CD4-positive, alpha-beta T cell (primary cell): ENCODE measurements at regions of chr19 and their contacts with region 1.

Region 1: GRCh38 chr19:34733826-34734600 is at the start of gene ZNF181:
- DNase-seq: peak; percentile 64 to 90 (median 74)
- ATAC-seq: peak; percentile 84
- H3K4me3 ChIP-seq: peak within 1 kb of the TSS; percentile 85
- H3K4me3 Mint-ChIP-seq: peak within 1 kb of the TSS; percentile 96
- H3K27ac ChIP-seq: peak within 1 kb of the TSS; percentile 91
- H3K27ac Mint-ChIP-seq: peak within 1 kb of the TSS; percentile 92
- H3K4me1 ChIP-seq: peaks cover 28% of the 10 kb centered on the region
- H3K4me1 Mint-ChIP-seq: peaks cover 34% of the 10 kb centered on the region
- H3K27me3 ChIP-seq: no peaks in the 10 kb centered on the region
- H3K27me3 Mint-ChIP-seq: no peaks in the 10 kb centered on the region
- CTCF ChIP-seq: no peak
- total RNA-seq, gene ZNF181: 2.0 to 2.9 TPM

Region 2: DNA sequence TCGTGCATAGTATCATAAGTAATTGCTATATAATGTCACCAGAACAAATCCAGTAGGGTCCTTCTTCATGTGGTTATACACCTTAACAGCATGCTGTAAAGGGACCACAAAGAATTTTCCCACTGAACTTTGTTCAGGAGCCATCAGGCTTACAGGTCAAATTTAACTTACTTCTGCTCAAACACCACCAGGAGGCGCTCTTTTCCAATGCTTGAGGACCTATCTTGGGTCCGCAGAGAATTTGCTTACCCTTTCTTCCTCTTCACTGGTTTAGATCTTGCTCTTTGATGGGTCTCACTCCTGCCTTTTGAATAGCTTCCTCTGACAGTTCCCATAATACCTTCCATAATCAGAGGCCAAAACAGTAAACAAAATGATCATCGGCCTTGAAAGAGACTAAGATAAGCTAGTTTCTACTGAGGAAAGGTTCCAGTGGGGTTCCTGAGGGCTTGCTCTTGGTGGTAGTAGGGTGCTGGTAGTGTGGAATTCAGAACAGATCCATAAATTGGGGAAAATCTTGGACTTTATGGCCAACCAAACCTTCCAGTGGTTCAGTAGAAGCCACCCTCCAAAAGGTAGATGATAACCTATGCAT is 94.4 kb before region 1 on chr19:
- CTCF ChIA-PET with region 1: no interaction called
- POLR2A ChIA-PET with region 1: no interaction called
- intact Hi-C with region 1: no loop called
- DNase-seq: peak; percentile 8 to 89 (median 52)
- ATAC-seq: peak; percentile 48
- H3K4me3 ChIP-seq: no peak overlapping the region
- H3K4me3 Mint-ChIP-seq: no peak overlapping the region
- H3K27ac ChIP-seq: no peak overlapping the region
- H3K27ac Mint-ChIP-seq: no peak overlapping the region
- H3K4me1 ChIP-seq: no peaks in the 10 kb centered on the region
- H3K4me1 Mint-ChIP-seq: no peaks in the 10 kb centered on the region
- H3K27me3 ChIP-seq: no peaks in the 10 kb centered on the region
- H3K27me3 Mint-ChIP-seq: no peaks in the 10 kb centered on the region
- CTCF ChIP-seq: peak; percentile 81

Region 3: DNA sequence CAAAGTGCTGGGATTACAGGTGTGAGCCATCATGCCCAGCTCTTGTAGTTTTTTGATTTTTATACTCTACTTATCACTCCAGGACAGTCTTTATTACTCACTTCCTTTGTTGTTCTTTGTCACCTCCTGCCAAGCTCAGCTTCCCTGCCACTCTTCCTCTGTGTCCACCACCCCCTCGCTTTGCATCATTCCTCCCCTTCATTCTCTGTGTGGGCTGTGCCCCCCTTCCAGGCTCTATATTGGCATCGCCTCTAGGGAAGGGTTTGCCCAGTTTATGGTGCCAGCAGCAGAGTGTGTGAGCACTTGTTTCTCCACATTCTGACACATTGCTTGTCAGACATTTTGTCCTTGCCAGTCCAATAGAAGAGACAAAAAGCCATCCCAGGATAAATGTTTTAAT is 41.5 kb before region 1 on chr19:
- CTCF ChIA-PET with region 1: no interaction called
- POLR2A ChIA-PET with region 1: no interaction called
- intact Hi-C with region 1: no loop called
- DNase-seq: no peak
- ATAC-seq: no peak
- H3K4me3 ChIP-seq: no peak overlapping the region
- H3K4me3 Mint-ChIP-seq: no peak overlapping the region
- H3K27ac ChIP-seq: no peak overlapping the region
- H3K27ac Mint-ChIP-seq: no peak overlapping the region
- H3K4me1 ChIP-seq: no peaks in the 10 kb centered on the region
- H3K4me1 Mint-ChIP-seq: no peaks in the 10 kb centered on the region
- H3K27me3 ChIP-seq: peaks cover 3 to 14% of the 10 kb centered on the region in 2 experiments
- H3K27me3 Mint-ChIP-seq: peaks cover 40% of the 10 kb centered on the region
- CTCF ChIP-seq: no peak

Region 4: DNA sequence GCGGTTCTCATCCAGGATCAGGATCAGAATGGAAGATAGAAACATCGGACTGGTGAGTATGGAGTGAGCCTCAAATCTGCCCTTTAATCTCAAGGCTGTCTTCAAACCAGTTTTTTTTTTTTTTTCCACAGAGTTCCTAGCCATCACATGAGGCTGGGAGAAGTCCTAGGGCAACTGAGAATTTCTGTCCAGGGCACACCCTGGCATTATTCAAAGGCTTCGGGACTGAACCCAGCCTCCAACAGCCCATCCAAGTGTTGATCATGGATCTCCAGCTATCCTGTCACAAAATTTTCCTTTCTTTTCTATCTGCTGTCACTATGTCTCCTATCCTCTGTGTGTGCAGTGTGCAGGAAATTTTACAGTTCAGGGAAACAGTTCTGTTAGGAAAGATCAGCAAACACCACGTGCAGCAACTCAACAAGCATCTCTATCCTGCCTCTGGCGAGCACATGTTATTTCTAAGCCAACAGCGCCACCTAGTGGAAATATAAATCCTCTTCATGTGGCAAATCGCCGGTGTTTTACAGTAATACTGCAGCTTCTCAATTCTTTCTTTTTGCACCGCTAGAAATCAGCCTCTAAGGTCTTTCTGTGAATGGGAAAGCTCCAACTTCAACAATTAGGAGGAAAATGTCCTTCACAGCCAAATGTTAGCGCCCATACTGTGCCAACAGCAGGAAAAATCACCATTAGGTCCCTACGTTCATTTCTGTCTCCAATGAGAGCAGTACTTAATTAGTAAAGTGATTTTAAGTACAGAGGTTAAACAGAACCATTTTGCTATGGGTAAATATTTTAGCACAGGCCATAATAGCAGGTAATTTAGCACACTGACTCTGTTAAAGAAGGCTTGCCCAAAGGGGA is 21.4 kb before region 1 on chr19:
- CTCF ChIA-PET with region 1: no interaction called
- POLR2A ChIA-PET with region 1: no interaction called
- intact Hi-C with region 1: no loop called
- DNase-seq: peak in 13 of 14 experiments; percentile 8 to 89 (median 41)
- ATAC-seq: peak; percentile 67
- H3K4me3 ChIP-seq: no peak overlapping the region
- H3K4me3 Mint-ChIP-seq: no peak overlapping the region
- H3K27ac ChIP-seq: no peak overlapping the region
- H3K27ac Mint-ChIP-seq: no peak overlapping the region
- H3K4me1 ChIP-seq: no peaks in the 10 kb centered on the region
- H3K4me1 Mint-ChIP-seq: no peaks in the 10 kb centered on the region
- H3K27me3 ChIP-seq: peaks cover under 1 to 13% of the 10 kb centered on the region in 2 experiments
- H3K27me3 Mint-ChIP-seq: peaks cover 40% of the 10 kb centered on the region
- CTCF ChIP-seq: peak; percentile 69

Region 5: GRCh38 chr19:34772697-34773554 is 38.9 kb after region 1 on chr19 and contains the start of gene ZNF599:
- CTCF ChIA-PET with region 1: no interaction called
- POLR2A ChIA-PET with region 1: interaction called, 7 read pairs
- intact Hi-C with region 1: loop called (anchors 1 to 2 kb)
- DNase-seq: peak; percentile 80 to 96 (median 88)
- ATAC-seq: peak; percentile 94
- H3K4me3 ChIP-seq: peak within 1 kb of the TSS; percentile 90
- H3K4me3 Mint-ChIP-seq: peak within 1 kb of the TSS; percentile 99
- H3K27ac ChIP-seq: peak within 1 kb of the TSS; percentile 43 to 74
- H3K27ac Mint-ChIP-seq: peak within 1 kb of the TSS; percentile 93
- H3K4me1 ChIP-seq: peaks cover 16% of the 10 kb centered on the region
- H3K4me1 Mint-ChIP-seq: peaks cover 20% of the 10 kb centered on the region
- H3K27me3 ChIP-seq: no peaks in the 10 kb centered on the region
- H3K27me3 Mint-ChIP-seq: peaks cover 14% of the 10 kb centered on the region
- CTCF ChIP-seq: no peak
- total RNA-seq, gene ZNF599: 2.0 to 2.9 TPM

Region 6: GRCh38 chr19:34851353-34851752 is 117.3 kb after region 1 on chr19:
- CTCF ChIA-PET with region 1: no interaction called
- POLR2A ChIA-PET with region 1: no interaction called
- intact Hi-C with region 1: loop called in 1 of 2 experiments (anchors 5 kb)
- DNase-seq: peak in 3 of 14 experiments; percentile 6 to 34 (median 8)
- ATAC-seq: no peak
- H3K4me3 ChIP-seq: no peak overlapping the region
- H3K4me3 Mint-ChIP-seq: no peak overlapping the region
- H3K27ac ChIP-seq: no peak overlapping the region
- H3K27ac Mint-ChIP-seq: peak overlapping the region; percentile 24
- H3K4me1 ChIP-seq: peaks cover 16% of the 10 kb centered on the region
- H3K4me1 Mint-ChIP-seq: peaks cover 47% of the 10 kb centered on the region
- H3K27me3 ChIP-seq: no peaks in the 10 kb centered on the region
- H3K27me3 Mint-ChIP-seq: no peaks in the 10 kb centered on the region
- CTCF ChIP-seq: no peak

Region 7: GRCh38 chr19:34926685-34927375 is 192.8 kb after region 1 on chr19 and contains the start of gene ZNF30:
- CTCF ChIA-PET with region 1: interaction called, 3 read pairs
- POLR2A ChIA-PET with region 1: interaction called, 11 read pairs
- intact Hi-C with region 1: no loop called
- DNase-seq: peak; percentile 62 to 90 (median 79)
- ATAC-seq: peak; percentile 93
- H3K4me3 ChIP-seq: peak within 1 kb of the TSS; percentile 89
- H3K4me3 Mint-ChIP-seq: peak within 1 kb of the TSS; percentile 91
- H3K27ac ChIP-seq: no peak within 1 kb of the TSS
- H3K27ac Mint-ChIP-seq: peak within 1 kb of the TSS; percentile 71
- H3K4me1 ChIP-seq: peaks cover 13% of the 10 kb centered on the region
- H3K4me1 Mint-ChIP-seq: peaks cover 28% of the 10 kb centered on the region
- H3K27me3 ChIP-seq: peaks cover 0 to 7% of the 10 kb centered on the region in 2 experiments
- H3K27me3 Mint-ChIP-seq: peaks cover 9% of the 10 kb centered on the region
- CTCF ChIP-seq: no peak
- total RNA-seq, gene ZNF30: 0.84 to 1.1 TPM